ENCODE measurements at regions of chr1 and their contacts with region 1.

Region 1: DNA sequence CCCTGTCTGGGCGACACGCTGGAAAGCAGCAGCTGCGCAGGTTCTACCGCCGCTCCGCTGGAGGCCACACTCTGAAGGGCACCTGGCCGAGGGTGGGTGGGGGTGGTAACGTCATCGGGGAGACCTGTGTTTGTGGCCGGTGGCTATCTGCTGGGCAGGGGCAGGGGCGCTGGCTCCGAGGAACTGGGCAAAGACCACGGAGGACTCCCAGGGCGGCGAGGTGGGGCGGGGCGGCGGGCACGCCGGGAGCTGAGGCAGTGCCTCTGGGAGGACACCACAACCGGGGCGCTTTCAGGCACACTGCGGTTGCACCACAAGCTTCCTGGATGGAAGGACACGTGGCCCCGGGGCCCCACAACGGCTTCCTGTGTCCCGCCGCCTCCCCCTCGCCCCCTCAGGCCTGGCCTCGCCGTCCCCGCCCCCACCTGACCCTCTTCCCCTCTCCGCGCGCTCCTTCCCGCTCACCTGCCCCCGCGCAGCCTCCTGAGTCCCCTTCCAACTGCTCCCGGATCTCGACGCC is 3.3 kb upstream of the DENND2D start:
- DNase-seq: peak; percentile 65 to 93 (median 82)
- ATAC-seq: peak; percentile 58 to 71
- H3K4me3 Mint-ChIP-seq: peak overlapping the region; percentile 83 to 100 (median 99)
- H3K27ac Mint-ChIP-seq: peak overlapping the region; percentile 89 to 99 (median 96)
- H3K4me1 Mint-ChIP-seq: peaks cover 33 to 85% (median 71%) of the 10 kb centered on the region in 4 donors
- H3K27me3 Mint-ChIP-seq: no peaks in the 10 kb centered on the region

Region 2: DNA sequence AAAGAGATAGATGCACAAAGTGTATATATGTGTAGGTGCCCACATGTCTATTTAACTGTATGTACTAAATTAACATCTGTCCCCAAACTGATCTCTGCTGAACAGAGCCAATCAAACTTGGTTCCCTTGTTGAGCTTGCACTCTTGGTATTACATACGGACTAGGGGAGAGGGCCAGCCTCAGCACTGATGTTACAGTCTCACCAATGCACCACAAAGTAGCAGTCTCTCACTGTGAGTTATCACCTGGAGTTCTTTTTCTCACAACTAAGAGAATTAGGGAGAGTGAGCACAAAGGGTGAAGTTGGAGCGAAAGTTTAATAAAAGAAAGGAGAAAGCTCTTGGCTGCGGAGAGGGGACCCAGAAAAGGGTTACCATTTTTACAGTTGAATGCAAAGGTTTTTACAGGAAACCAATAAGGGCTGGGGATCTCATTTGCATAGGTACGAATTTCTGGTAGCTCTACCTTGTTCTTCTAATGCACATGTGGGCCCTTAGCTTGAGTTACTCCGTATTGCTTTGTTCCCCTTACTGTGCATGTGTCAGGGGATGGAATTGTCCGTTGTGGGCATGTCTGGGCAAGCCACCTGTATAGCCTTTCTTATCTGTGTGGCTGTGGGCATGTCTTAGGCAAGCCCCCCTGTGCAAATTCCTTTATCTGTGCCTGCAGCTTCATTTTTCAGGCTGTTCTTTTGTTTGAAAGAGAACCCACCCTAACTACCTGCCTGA is 10.5 kb after region 1 on chr1:
- POLR2A ChIA-PET with region 1: interaction called, 1,200 read pairs
- DNase-seq: no peak
- ATAC-seq: no peak
- H3K4me3 Mint-ChIP-seq: peak overlapping the region; percentile 44 to 95 (median 78)
- H3K27ac Mint-ChIP-seq: peak overlapping the region; percentile 87 to 99 (median 96)
- H3K4me1 Mint-ChIP-seq: peaks cover 55 to 95% (median 89%) of the 10 kb centered on the region in 4 donors
- H3K27me3 Mint-ChIP-seq: peaks cover 0 to 3% (median 0%) of the 10 kb centered on the region in 5 donors

Region 3: GRCh38 chr1:111222308-111223125 is 18.8 kb after region 1 on chr1:
- POLR2A ChIA-PET with region 1: interaction called, 1,200 read pairs
- DNase-seq: peak; percentile 44 to 84 (median 68)
- ATAC-seq: peak; percentile 22
- H3K4me3 Mint-ChIP-seq: peak overlapping the region; percentile 68 to 95 (median 84)
- H3K27ac Mint-ChIP-seq: peak overlapping the region; percentile 87 to 99 (median 95)
- H3K4me1 Mint-ChIP-seq: peaks cover 58 to 99% (median 93%) of the 10 kb centered on the region in 4 donors
- H3K27me3 Mint-ChIP-seq: no peaks in the 10 kb centered on the region

Measured in naive thymus-derived CD8-positive, alpha-beta T cell (primary cell).